Activated CD8-positive, alpha-beta memory T cell treated with anti-CD3 and anti-CD28 coated beads, Interleukin-2, amount 10 ng/mL, durations not matched to agents 7 days and 5 days (primary cell): ENCODE measurements at regions of chr11 and their contacts with region 1.

Region 1: DNA sequence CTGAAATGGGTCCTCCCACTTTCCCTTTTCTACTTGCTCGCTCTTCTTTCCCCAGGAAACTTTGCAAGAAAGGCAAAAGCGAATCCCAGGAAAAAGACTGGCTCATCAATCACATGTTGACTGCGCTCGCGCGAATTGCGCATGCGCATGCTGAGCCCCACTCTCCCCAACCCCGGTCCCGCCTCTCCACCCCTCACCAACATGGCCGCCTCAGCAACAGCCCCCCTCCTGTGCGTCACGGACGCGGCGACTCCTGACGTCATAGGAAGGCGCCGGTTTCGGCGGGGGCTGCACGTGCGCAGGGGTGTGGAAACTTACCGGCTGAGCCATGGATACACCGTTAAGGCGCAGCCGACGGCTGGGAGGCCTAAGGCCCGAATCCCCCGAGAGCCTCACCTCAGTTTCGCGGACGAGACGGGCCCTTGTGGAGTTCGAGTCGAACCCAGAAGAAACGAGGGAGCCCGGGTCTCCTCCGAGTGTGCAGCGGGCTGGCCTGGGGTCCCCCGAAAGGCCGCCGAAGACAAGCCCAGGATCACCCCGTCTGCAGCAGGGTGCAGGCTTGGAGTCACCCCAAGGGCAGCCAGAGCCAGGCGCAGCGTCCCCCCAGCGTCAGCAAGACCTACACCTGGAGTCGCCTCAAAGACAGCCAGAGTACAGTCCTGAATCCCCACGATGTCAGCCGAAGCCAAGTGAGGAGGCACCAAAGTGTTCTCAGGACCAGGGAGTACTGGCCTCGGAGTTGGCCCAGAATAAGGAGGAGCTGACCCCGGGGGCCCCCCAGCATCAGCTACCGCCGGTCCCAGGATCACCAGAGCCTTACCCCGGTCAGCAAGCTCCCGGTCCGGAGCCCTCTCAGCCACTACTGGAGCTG is at the start of gene CCDC86:
- DNase-seq: peak; percentile 98
- ATAC-seq: peak; percentile 91
- H3K4me3 Mint-ChIP-seq: peak within 1 kb of the TSS; percentile 84
- H3K27ac Mint-ChIP-seq: peak within 1 kb of the TSS; percentile 84
- H3K4me1 Mint-ChIP-seq: peaks cover 41% of the 10 kb centered on the region
- H3K27me3 Mint-ChIP-seq: no peaks in the 10 kb centered on the region
- total RNA-seq, gene CCDC86: 26.5 to 40.8 TPM

Region 2: DNA sequence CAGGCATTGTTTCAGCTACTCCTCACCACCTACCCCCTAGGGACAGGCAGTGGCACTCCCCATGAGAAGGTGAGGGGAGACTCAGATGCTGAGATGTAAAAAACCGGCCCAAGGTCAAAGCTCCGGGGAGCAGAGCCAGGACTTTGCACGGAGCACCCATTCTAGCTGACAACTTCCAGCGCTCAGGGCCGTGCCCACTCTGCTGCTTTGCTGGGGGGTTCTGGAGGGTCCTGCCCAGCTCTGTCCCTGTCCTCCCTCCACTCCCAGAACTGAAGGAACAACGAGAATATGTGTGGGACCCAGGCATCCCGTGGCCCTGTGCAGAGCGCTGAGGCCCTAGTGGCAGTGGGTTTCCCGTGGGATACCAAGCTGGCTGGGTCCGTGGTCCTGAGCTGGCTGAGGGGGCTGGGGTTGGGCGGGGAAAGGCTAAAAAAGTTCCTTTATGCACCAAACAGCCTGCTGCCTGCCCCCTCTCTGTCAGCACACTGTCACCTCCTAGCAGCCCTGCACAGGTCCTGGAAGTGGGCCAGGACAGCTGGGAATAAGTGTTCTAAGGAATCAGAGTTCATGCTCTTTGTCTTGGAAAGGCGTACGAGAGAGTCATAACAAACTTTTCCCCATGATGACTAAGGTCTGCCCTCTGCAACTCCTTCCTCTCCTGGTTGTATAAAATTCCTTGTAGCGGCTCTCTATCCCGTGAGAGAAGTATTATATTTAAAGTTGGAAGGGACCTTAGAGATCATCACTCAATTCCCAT is 55.0 kb before region 1 on chr11:
- CTCF ChIA-PET with region 1: no interaction called
- DNase-seq: no peak
- ATAC-seq: no peak
- H3K4me3 Mint-ChIP-seq: no peak overlapping the region
- H3K27ac Mint-ChIP-seq: no peak overlapping the region
- H3K4me1 Mint-ChIP-seq: no peaks in the 10 kb centered on the region
- H3K27me3 Mint-ChIP-seq: peaks cover 5% of the 10 kb centered on the region

Region 3: DNA sequence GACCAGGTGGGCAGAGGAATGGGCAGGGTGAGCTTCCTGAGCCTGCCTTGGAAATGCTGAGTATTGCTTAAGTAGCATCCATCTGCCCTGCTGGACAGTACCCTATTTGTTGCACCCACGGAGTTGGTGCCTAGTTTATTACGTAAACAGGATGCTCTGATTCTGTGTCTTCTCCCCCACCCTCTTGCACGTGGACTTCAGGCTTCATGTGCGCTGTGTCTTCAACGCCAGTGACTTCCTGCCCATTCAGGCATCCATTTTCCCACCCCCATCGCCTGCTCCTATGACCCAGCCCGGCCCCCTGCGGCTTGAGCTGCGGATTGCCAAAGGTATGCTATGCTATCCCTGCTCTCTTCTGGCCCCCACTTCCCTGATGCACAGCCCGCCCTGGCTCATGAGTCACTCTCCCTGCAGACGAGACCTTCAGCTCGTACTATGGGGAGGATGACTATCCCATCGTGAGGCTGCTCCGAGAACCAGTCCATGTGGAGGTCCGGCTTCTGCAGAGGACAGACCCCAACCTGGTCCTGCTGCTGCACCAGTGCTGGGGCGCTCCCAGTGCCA is 31.0 kb after region 1 on chr11:
- CTCF ChIA-PET with region 1: interaction called, 13 read pairs
- DNase-seq: no peak
- ATAC-seq: no peak
- H3K4me3 Mint-ChIP-seq: no peak overlapping the region
- H3K27ac Mint-ChIP-seq: no peak overlapping the region
- H3K4me1 Mint-ChIP-seq: peaks cover 62% of the 10 kb centered on the region
- H3K27me3 Mint-ChIP-seq: no peaks in the 10 kb centered on the region

Region 4: DNA sequence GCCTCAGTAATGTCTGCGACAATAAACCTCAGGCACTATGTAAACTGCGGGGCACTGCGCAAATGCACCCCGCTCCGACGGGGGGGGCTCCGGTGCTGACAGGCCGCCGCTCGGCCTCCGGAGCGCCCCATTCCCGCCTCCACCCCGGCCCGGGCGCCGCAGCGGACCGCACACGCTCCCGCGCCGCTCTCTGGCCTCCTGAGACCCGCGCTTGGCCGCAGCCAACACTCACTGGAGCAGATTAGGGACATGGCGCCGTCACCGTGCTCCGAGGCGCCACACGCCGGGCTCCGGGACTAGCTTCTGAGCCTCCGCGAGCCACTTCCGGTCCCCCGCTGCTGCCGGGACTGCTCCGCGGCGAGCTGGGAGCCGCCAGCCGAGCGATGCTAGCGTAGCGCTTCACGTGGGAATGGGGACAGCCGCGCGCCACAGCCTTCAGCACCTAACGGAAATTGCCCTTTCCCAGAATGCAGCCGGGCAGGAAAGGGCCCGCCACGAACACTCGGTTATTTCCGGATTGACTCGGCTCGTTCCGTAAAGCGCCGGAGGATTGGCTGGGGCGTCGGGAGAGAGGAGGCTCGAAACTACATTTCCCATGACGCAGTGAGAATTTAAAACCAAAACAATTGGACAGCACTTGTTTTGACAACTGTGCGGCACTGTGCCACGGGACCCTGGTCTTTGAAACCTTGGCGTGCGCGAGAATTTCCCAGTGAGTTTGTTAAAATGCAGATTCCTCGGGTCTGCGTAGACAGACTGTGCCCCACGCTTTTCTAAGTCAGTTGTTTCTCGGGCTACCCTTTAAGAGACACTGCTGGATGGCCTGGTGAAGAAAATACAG is 64.3 kb after region 1 on chr11 and contains the start of gene PRPF19:
- CTCF ChIA-PET with region 1: interaction called, 230 read pairs
- DNase-seq: peak; percentile 99
- ATAC-seq: peak; percentile 96
- H3K4me3 Mint-ChIP-seq: peak within 1 kb of the TSS; percentile 78
- H3K27ac Mint-ChIP-seq: peak within 1 kb of the TSS; percentile 92
- H3K4me1 Mint-ChIP-seq: peaks cover 35% of the 10 kb centered on the region
- H3K27me3 Mint-ChIP-seq: peaks cover 14% of the 10 kb centered on the region
- total RNA-seq, gene PRPF19: 125 to 144 TPM